Right cardiac atrium (tissue), 5 donors: ENCODE measurements at regions of chr1 and their contacts with region 1.

Region 1: DNA sequence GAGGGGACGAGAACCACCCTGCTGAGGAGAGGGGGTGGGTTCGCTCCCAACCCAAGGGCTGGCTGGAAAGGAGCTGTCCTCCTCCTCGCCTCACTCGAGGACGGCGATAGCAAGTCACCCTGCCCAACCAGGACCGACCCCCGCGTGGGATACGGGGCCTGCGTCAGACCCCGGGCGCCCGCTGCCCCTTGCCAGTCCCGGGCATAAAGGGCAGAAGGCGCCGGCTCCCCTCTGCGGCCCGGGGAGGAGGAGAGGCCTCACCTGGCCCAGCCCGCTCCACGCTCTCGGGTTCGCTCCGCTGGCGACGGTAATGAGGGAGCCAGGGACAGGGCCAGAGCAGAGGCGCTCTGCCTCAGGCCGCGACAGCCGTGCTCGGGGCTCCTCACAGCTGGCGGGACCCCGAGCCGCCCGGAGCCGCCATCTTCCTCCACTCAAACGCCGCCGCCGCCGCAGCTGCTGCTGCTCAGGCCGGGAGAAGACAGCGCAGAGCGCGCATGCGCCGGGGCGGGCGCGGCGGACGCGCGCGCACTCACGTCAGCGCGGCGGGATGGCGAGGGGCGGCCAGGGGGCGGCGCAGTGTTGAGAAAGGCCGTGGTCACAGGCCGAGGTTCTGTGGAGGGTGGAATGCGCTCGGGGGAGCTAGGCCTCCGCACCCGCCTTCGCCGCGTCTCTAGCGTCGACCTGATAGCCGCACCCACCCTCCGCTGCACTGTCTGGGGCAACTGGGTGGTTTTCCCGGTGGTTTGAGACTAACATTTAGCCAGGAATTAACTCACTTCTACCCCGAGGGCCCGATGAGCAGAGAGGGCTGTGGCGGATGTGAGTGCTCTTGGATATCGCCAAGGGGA is at the start of gene FBXO42:
- DNase-seq: peak; percentile 92 to 97 (median 97)
- ATAC-seq: peak; percentile 97 to 98
- H3K4me3 ChIP-seq: peak within 1 kb of the TSS; percentile 77
- H3K27ac ChIP-seq: peak within 1 kb of the TSS; percentile 94
- H3K4me1 ChIP-seq: no peaks in the 10 kb centered on the region
- H3K27me3 ChIP-seq: no peaks in the 10 kb centered on the region
- total RNA-seq, gene FBXO42: 15.7 to 18.1 (median 16.4) TPM

Region 2: GRCh38 chr1:16206547-16207317 is 145.5 kb before region 1 on chr1:
- intact Hi-C with region 1: no loop called
- DNase-seq: peak; percentile 99
- ATAC-seq: peak; percentile 94 to 95
- H3K4me3 ChIP-seq: peak overlapping the region; percentile 31
- H3K27ac ChIP-seq: peak overlapping the region; percentile 67
- H3K4me1 ChIP-seq: peaks cover 2% of the 10 kb centered on the region
- H3K27me3 ChIP-seq: no peaks in the 10 kb centered on the region

Region 3: DNA sequence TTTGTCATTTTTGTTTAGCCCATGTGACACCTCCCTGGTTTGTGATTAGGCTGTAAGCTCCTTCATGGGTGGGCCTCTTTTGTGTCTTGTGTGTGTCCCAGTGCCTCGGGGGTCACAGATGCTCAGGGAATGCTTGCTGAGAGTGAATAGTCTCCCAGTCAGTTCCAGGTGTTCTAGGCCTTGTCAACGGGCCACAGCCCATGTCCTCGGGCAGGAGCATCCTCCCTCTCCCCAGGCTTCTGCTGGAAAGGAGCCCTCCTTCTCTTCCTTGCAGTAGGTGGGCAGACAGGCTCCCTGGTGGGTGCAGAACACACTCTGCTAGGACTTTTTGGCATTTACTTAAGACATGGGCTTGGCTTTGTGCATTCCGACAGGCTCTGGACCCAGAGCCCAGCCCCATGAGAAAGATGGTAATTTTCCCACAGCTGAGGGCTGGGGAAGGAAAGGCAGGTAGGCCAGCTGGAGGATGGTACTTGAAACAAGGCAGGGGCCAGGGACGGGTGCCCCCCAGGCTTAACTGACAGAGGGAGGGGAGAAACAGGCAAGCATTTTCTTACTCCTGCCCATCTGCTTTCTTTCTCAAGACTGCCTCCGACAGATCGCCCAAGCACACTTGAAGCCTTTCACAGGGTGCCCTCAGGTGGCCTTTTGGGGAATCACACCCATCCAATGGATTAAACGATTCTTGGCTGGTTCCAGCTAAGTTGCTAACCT is 108.1 kb before region 1 on chr1:
- intact Hi-C with region 1: loop called in 2 of 4 experiments (anchors 10 kb)
- DNase-seq: peak; percentile 75 to 91 (median 81)
- ATAC-seq: peak; percentile 5 to 39
- H3K4me3 ChIP-seq: no peak overlapping the region
- H3K27ac ChIP-seq: no peak overlapping the region
- H3K4me1 ChIP-seq: peaks cover 19% of the 10 kb centered on the region
- H3K27me3 ChIP-seq: no peaks in the 10 kb centered on the region

Region 4: DNA sequence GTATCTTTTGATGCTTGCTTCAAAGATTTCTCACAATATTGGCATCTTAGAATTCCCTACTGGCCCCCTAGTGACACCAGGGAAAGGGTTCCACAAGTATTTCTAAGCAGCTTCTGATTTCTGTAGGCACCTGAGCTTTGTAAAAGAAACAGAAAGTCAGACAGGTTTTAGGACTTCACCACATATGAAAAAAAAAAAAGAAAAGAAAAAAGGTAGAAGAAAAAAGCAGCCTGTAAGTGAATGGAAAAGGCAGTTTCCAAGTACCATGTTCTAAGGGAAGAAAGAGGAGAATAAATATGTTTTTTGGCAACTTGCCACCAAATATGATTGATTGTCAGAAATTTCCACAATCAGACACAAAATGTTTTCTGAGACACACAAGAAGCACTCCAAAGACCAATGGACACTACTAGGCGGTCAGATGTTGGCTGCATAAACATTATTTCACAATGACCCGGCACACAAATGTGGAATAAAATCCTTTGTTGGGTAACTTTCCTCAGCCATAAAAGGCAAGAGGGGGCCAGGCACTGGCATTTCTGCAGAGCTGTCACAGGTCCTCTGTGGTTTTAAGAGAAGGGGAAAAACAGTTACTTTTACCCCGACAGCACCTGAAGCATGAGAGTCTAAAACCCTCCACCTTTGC is 102.5 kb before region 1 on chr1:
- intact Hi-C with region 1: loop called (anchors 5 to 10 kb)
- DNase-seq: peak in 1 of 3 donors; percentile 87
- ATAC-seq: peak; percentile 34 to 48
- H3K4me3 ChIP-seq: no peak overlapping the region
- H3K27ac ChIP-seq: peak overlapping the region; percentile 64
- H3K4me1 ChIP-seq: peaks cover 25% of the 10 kb centered on the region
- H3K27me3 ChIP-seq: no peaks in the 10 kb centered on the region

Region 5: DNA sequence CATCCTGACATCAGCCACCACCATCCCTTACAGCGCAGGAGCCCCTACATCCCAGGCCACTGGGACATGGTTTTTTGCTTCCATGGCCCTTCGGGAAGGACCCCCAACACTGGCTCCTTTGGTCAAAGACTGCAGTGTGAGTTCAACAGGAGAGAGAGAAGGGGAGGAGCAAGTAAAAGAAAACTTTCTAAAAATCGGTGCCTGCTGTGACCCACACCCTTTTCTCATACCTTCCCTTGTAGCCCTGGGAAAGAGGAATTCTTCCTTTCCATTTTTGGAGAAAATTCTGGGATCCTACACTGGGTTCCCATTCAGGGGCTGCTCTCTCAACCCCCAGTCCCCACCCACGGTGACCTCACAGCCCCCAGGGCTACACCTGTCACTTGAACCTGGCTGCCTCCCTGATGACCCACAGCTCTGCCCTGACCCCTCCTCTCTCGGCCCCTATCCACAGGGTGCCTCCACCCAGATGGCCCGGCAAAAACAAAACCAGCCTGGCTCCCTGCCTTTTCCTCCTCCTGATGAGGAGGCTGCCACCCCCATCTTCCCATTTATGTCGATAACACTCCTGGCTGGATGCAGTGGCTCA is 963.4 kb after region 1 on chr1:
- intact Hi-C with region 1: no loop called
- DNase-seq: no peak
- ATAC-seq: no peak
- H3K4me3 ChIP-seq: no peak overlapping the region
- H3K27ac ChIP-seq: no peak overlapping the region
- H3K4me1 ChIP-seq: no peaks in the 10 kb centered on the region
- H3K27me3 ChIP-seq: no peaks in the 10 kb centered on the region